IMR-90 (cell line): ENCODE measurements at regions of chr4 and their contacts with region 1.

Region 1: DNA sequence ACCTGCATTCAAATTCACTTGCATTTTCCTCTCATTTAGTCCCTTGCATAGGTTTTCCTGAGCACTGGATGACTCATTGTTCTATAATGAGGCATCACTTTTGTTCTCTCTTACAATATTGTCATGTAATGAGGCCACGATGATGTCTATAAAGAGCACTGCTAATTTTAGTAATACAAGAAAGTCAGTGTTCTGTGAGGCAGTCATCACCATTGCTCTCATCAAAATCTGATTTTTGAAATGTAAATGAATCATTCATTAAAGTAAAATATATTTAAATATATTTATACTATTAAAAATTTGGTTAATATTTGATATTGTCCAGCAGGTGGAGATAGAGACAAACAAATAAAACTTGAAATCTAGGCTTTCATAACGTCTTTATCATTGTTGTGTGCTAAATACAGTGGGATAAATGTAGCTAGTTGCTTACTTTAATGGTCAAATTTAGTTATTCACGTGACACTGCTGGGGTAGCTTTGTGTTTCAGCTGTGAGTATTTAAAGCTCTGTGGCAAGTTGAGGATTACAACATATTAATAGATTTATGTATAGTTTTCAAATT is 15.4 kb downstream of the HMGB2 start:
- DNase-seq: peak; percentile 74
- ATAC-seq: peak; percentile 71
- H3K4me3 ChIP-seq: no peak overlapping the region
- H3K27ac ChIP-seq: no peak overlapping the region
- H3K4me1 ChIP-seq: no peaks in the 10 kb centered on the region
- H3K27me3 ChIP-seq: no peaks in the 10 kb centered on the region
- CTCF ChIP-seq: peak; percentile 47
- POLR2A ChIP-seq: no peak
- RAD21 ChIP-seq: peak; percentile 50

Region 2: DNA sequence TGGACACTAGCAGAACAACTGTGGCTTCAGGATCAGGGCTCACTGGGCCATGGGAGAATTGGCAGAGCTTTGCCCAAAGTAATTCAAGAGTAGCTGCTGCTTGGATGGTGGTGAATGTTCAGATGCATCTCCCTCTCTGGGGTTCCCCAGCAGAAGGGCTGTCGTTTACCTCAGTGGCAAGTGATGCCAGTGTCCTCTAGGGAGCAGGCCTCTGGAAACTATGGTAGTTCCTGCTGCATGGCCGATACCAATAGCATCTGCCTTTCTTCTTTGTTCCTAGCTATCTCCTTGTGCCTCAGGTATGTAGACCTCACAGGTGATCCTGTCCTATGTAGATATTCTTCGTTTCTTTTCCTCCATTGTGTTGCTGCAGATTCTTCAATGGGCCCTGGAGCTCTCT is 11.0 kb before region 1 on chr4:
- CTCF ChIA-PET with region 1: interaction called, 10 read pairs
- POLR2A ChIA-PET with region 1: no interaction called
- dilution Hi-C with region 1: no loop called
- in situ Hi-C with region 1: no loop called
- intact Hi-C with region 1: no loop called
- DNase-seq: no peak
- ATAC-seq: no peak
- H3K4me3 ChIP-seq: no peak overlapping the region
- H3K27ac ChIP-seq: no peak overlapping the region
- H3K4me1 ChIP-seq: no peaks in the 10 kb centered on the region
- H3K27me3 ChIP-seq: no peaks in the 10 kb centered on the region
- CTCF ChIP-seq: no peak
- POLR2A ChIP-seq: no peak
- RAD21 ChIP-seq: no peak

Region 3: DNA sequence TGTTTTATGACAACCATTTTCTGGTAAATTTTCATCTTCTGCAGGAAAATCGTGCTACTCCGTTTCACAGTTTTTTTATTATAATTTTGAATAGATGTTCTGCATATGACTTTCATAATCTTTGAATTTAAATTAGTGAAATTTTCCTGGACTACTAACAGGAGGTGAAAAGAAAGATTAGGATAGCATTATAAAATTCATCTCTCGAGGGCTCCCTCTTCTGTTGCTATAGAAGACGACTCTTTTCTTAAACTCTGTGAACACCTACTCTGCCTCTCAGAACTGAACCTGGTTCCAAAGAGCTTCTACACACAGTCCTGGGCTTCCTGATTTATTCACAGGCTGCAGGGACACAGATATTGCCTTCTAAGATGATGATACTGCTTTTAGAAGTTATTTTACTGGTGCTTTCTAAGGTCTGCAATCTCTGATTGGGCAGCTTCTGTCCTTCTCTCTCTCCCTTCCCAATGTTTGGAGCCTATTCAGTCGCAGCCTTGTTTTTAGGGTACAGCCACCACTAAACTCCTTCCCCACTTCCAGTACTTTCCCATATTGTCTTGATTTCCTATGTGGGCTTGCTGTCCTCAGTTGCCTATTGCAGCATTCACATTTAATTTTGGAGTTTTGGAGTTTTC is 42.0 kb after region 1 on chr4:
- CTCF ChIA-PET with region 1: no interaction called
- POLR2A ChIA-PET with region 1: no interaction called
- dilution Hi-C with region 1: no loop called
- in situ Hi-C with region 1: no loop called
- intact Hi-C with region 1: loop called (anchors 2 kb)
- DNase-seq: peak; percentile 25
- ATAC-seq: peak; percentile 81
- H3K4me3 ChIP-seq: no peak overlapping the region
- H3K27ac ChIP-seq: no peak overlapping the region
- H3K4me1 ChIP-seq: no peaks in the 10 kb centered on the region
- H3K27me3 ChIP-seq: no peaks in the 10 kb centered on the region
- CTCF ChIP-seq: peak; percentile 42
- POLR2A ChIP-seq: no peak
- RAD21 ChIP-seq: peak; percentile 36

Region 4: DNA sequence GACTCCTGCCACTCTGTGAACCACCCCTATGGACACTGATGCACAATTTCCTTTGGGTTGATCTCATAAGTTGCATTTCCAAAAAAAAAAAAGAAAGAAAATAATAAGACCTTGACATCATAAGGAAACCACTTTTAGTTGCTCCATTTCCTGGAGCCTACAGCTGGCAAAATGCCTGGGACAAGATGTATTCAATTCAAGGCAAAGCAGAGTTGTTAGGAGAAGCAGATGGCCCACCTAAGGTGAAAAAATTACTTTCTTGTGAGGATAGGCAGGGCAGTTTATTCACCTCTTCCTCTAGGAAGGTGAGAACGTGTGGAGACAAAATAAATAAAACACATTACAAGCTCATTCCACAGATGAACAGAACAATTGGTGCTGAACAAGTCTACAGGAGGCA is 94.3 kb after region 1 on chr4:
- CTCF ChIA-PET with region 1: interaction called, 7 read pairs
- POLR2A ChIA-PET with region 1: no interaction called
- dilution Hi-C with region 1: no loop called
- in situ Hi-C with region 1: loop called (anchors 5 kb)
- intact Hi-C with region 1: loop called (anchors 1 kb)
- DNase-seq: peak; percentile 57
- ATAC-seq: no peak
- H3K4me3 ChIP-seq: no peak overlapping the region
- H3K27ac ChIP-seq: no peak overlapping the region
- H3K4me1 ChIP-seq: no peaks in the 10 kb centered on the region
- H3K27me3 ChIP-seq: no peaks in the 10 kb centered on the region
- CTCF ChIP-seq: no peak
- POLR2A ChIP-seq: no peak
- RAD21 ChIP-seq: no peak

Region 5: DNA sequence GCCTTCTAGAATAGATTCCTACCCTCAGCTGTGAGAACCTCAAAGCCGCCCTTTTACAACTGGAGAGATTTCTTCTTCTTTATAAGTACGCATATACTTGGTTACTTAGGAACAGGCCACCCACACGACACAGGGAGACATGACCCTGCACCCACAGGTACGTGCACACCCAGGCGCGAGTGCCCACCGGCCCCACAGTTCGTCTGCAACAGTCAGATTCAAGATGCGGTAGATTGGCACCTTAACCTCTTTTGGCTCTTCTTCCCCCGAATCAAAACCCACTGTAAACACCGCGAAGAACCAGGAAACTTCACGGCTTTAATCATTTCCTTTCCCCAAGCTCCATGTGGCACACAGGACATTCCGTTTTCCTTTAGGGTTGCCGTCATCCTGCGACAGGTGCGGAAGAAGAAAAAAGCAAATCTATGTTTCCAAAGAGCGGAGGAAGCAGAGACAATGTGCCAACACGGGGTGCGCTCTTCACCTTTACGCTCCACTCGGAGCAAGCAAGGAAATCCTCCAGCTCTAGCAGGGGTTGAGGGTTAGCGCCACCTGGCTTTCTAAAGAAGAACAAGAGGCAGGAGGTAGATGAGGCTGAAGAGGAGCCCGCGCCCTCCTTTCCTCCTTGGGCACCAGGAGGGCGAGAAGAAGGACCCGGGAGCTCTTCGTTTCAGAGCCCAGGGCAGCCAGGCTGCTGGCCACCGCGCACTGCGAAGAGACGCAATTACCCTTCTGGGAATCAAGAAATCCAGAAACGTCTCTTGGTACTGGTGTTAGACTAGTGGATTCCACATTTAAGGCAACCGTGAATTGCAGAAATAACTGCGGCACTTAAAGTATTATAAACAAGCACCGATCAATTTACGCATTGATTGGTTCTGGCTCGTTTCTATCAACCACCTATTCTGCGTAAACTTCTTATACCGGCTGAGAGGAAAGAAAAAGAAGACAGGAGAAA is 175.6 kb after region 1 on chr4:
- CTCF ChIA-PET with region 1: interaction called, 3 read pairs
- POLR2A ChIA-PET with region 1: no interaction called
- dilution Hi-C with region 1: no loop called
- in situ Hi-C with region 1: loop called (anchors 10 kb)
- intact Hi-C with region 1: loop called (anchors 2 kb)
- DNase-seq: peak; percentile 62
- ATAC-seq: peak; percentile 73
- H3K4me3 ChIP-seq: peak overlapping the region; percentile 47
- H3K27ac ChIP-seq: no peak overlapping the region
- H3K4me1 ChIP-seq: peaks cover 16% of the 10 kb centered on the region
- H3K27me3 ChIP-seq: peaks cover 32% of the 10 kb centered on the region
- CTCF ChIP-seq: peak; percentile 70
- POLR2A ChIP-seq: no peak
- RAD21 ChIP-seq: peak; percentile 69